WTC11 (cell line): ENCODE measurements at regions of chr16 and their contacts with region 1.

Region 1: DNA sequence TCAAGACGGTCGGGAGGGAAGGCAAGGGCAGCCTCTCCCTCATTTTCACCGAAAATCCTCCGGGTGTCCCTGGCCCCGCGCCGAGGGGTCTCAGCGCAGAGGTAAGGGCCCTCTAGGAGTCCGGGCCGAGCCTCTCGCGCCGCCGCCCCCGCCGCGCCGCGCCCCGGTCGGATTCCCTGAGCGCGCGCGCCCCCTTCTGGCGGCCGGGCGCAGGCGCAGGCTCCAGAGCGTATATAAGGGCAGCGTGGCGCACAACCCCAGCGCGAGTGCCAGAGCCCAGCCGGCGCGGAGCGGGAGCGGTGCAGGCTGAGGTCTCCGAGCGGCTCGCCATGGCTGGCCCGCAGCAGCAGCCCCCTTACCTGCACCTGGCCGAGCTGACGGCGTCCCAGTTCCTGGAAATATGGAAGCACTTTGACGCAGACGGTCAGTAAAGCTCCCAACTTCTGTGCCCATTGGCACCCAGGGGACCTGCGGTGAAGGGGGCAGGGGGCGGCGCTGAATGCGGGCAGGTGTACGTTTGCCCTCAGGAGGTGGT is at the start of gene CALB2:
- DNase-seq: peak; percentile 81
- ATAC-seq: peak; percentile 95
- H3K4me3 Mint-ChIP-seq: peak within 1 kb of the TSS; percentile 69
- H3K27ac Mint-ChIP-seq: no peak within 1 kb of the TSS
- H3K4me1 Mint-ChIP-seq: peaks cover 11% of the 10 kb centered on the region
- H3K27me3 Mint-ChIP-seq: peaks cover 34% of the 10 kb centered on the region
- CTCF ChIP-seq: peak; percentile 93
- total RNA-seq, gene CALB2: 1.6 to 2.6 TPM (median 2.5 TPM) in 3 replicates

Region 2: DNA sequence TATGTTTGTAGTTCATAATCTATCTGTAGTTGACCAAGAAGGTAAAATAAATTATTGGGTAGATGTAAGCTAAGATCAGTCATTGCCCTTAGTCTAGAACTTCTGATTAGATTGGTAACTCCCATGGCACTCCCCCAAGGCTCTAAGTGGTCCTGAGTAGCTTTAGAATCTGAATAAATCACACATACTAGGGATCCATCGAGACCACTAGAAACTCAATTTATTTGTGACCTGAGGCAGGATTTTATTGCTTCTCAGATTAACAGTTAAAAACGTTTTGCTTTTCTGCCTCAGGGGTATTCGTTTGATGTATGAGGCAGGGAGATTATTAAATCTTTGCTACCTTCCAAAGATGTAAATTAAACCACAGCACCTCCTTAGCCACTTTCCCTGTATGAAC is 94.2 kb before region 1 on chr16:
- CTCF ChIA-PET with region 1: no interaction called
- POLR2A ChIA-PET with region 1: no interaction called
- DNase-seq: no peak
- ATAC-seq: no peak
- H3K4me3 Mint-ChIP-seq: no peak overlapping the region
- H3K27ac Mint-ChIP-seq: no peak overlapping the region
- H3K4me1 Mint-ChIP-seq: peaks cover 9% of the 10 kb centered on the region; the same call in 1 of the 2 replicates
- H3K27me3 Mint-ChIP-seq: no peaks in the 10 kb centered on the region
- CTCF ChIP-seq: no peak

Region 3: GRCh38 chr16:71344315-71344905 is 14.1 kb before region 1 on chr16:
- CTCF ChIA-PET with region 1: interaction called, 12 read pairs
- POLR2A ChIA-PET with region 1: no interaction called
- DNase-seq: no peak
- ATAC-seq: 0 out of 2 replicates have a peak, but pooled peaks have one; percentile 22
- H3K4me3 Mint-ChIP-seq: no peak overlapping the region
- H3K27ac Mint-ChIP-seq: no peak overlapping the region
- H3K4me1 Mint-ChIP-seq: peaks cover 10% of the 10 kb centered on the region
- H3K27me3 Mint-ChIP-seq: no peaks in the 10 kb centered on the region; the same call in 1 of the 2 replicates
- CTCF ChIP-seq: no peak

Region 4: GRCh38 chr16:71396594-71396993 is 38.1 kb after region 1 on chr16:
- CTCF ChIA-PET with region 1: no interaction called
- POLR2A ChIA-PET with region 1: no interaction called
- DNase-seq: no peak
- ATAC-seq: no peak
- H3K4me3 Mint-ChIP-seq: no peak overlapping the region
- H3K27ac Mint-ChIP-seq: no peak overlapping the region
- H3K4me1 Mint-ChIP-seq: peaks cover 37% of the 10 kb centered on the region
- H3K27me3 Mint-ChIP-seq: no peaks in the 10 kb centered on the region; the same call in 1 of the 2 replicates
- CTCF ChIP-seq: no peak